CD8-positive, alpha-beta T cell (primary cell): ENCODE measurements at regions of chr15 and their contacts with region 1.

Region 1: DNA sequence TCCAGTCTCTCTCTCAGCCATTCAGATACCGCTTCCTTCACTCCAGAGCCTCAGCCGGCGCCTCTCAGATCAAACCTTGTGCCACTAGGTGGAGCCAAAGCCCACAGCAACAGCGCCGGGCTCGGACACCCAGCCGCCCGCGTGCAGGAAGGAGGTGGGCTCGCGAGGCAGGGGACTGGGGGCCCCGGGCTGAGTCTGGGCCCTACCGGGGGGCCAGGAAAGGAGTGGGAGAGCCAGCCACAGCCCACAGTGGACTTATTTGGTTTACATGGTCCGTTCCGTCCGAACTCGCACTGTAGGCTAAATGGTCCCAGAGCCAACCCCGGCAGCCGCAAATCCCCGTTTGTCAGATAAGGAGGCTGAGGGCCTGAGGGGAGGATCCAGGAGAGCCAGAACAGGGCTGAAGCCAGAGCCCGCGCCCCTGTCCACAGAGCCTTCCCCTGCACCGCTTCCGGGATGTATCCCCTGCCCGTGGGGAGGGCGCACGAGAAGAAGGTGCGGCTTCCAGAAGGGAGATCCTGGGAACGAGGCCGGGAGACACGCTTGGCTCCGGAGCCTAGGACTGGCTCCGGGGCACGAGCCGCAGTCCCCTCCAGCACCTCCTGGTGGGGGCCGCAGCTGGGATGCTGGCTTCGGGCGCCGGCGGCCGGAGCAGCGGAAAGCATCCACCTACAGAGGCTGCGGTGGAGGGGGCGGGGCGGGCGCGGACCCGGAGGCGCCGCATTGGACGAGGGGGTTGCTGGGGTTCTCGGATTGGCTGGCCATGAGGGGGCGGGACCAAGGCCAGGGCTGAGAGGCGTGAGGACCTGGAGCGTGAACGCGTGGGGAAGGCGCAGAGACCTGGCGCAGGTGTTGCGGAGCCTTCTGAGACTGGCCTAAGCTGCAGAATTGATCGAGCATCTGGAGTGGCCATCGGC is 6.5 kb upstream of the CYP11A1 start:
- DNase-seq: peak; percentile 92 to 97 (median 95)
- ATAC-seq: peak; percentile 96
- H3K4me3 ChIP-seq: peak overlapping the region; percentile 89 to 96
- H3K4me3 Mint-ChIP-seq: peak overlapping the region; percentile 82
- H3K27ac ChIP-seq: peak overlapping the region; percentile 45 to 62
- H3K27ac Mint-ChIP-seq: no peak overlapping the region
- H3K4me1 ChIP-seq: peaks cover 15% of the 10 kb centered on the region
- H3K4me1 Mint-ChIP-seq: peaks cover 16% of the 10 kb centered on the region
- H3K27me3 ChIP-seq: no peaks in the 10 kb centered on the region
- H3K27me3 Mint-ChIP-seq: peaks cover 8% of the 10 kb centered on the region
- CTCF ChIP-seq: peak; percentile 86

Region 2: GRCh38 chr15:72397796-72398588 is 1976.0 kb before region 1 on chr15 and contains the start of gene TMEM202:
- CTCF ChIA-PET with region 1: no interaction called
- POLR2A ChIA-PET with region 1: no interaction called
- intact Hi-C with region 1: no loop called
- DNase-seq: no peak
- ATAC-seq: no peak
- H3K4me3 ChIP-seq: no peak within 1 kb of the TSS
- H3K4me3 Mint-ChIP-seq: no peak within 1 kb of the TSS
- H3K27ac ChIP-seq: no peak within 1 kb of the TSS
- H3K27ac Mint-ChIP-seq: no peak within 1 kb of the TSS
- H3K4me1 ChIP-seq: no peaks in the 10 kb centered on the region
- H3K4me1 Mint-ChIP-seq: no peaks in the 10 kb centered on the region
- H3K27me3 ChIP-seq: no peaks in the 10 kb centered on the region
- H3K27me3 Mint-ChIP-seq: peaks cover 20% of the 10 kb centered on the region
- CTCF ChIP-seq: no peak
- total RNA-seq, gene TMEM202: not detected

Region 3: GRCh38 chr15:74417246-74417645 is 43.3 kb after region 1 on chr15:
- CTCF ChIA-PET with region 1: no interaction called
- POLR2A ChIA-PET with region 1: no interaction called
- intact Hi-C with region 1: no loop called
- DNase-seq: no peak
- ATAC-seq: no peak
- H3K4me3 ChIP-seq: no peak overlapping the region
- H3K4me3 Mint-ChIP-seq: no peak overlapping the region
- H3K27ac ChIP-seq: no peak overlapping the region
- H3K27ac Mint-ChIP-seq: no peak overlapping the region
- H3K4me1 ChIP-seq: peaks cover 22% of the 10 kb centered on the region
- H3K4me1 Mint-ChIP-seq: peaks cover 16% of the 10 kb centered on the region
- H3K27me3 ChIP-seq: no peaks in the 10 kb centered on the region
- H3K27me3 Mint-ChIP-seq: no peaks in the 10 kb centered on the region
- CTCF ChIP-seq: no peak

Region 4: DNA sequence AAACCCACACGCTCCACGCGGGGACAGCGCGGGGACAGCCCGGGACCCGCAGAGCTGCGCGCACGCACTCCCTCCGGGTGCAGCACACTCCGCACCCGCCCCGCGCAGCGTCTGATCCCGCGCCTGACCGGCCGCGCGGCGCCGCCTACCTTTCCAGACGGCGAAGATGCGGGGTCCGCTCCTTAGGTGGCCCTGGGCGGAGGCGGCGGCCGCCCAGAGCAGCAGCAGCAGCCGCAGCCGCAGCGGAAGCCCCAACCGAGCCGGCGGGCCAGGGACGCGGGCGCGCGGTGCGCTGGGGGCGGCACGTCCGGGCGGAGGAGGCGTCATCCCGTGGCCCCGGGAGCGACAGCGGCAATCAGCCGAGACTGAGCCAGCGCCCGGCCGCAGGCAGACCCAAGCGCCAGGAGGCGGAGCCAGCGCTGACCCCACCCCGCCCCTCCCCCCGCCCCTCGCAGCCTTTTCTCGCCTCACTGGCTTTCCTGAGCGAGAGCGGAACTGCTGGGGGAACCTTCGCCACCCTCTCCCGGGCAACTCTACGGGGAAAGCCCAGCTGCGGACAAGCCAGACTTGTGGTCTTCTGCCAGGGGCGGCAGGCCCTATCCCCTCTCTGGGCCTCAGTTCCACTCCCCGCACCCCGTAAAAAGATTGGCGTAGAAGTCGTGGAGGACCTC is 59.7 kb after region 1 on chr15 and contains the start of gene SEMA7A:
- CTCF ChIA-PET with region 1: interaction called, 717 read pairs
- POLR2A ChIA-PET with region 1: interaction called, 3 read pairs
- intact Hi-C with region 1: loop called (anchors 1 kb)
- DNase-seq: peak; percentile 49 to 91 (median 72)
- ATAC-seq: peak; percentile 81
- H3K4me3 ChIP-seq: peak within 1 kb of the TSS; percentile 56 to 68
- H3K4me3 Mint-ChIP-seq: peak within 1 kb of the TSS; percentile 80
- H3K27ac ChIP-seq: peak within 1 kb of the TSS; percentile 23 to 73
- H3K27ac Mint-ChIP-seq: peak within 1 kb of the TSS; percentile 57
- H3K4me1 ChIP-seq: peaks cover 16% of the 10 kb centered on the region
- H3K4me1 Mint-ChIP-seq: peaks cover 40% of the 10 kb centered on the region
- H3K27me3 ChIP-seq: no peaks in the 10 kb centered on the region
- H3K27me3 Mint-ChIP-seq: no peaks in the 10 kb centered on the region
- CTCF ChIP-seq: no peak
- total RNA-seq, gene SEMA7A: 8.8 to 9.4 TPM

Region 5: GRCh38 chr15:74460871-74461846 is 87.2 kb after region 1 on chr15 and contains the start of gene UBL7:
- CTCF ChIA-PET with region 1: interaction called, 717 read pairs
- POLR2A ChIA-PET with region 1: interaction called, 4 read pairs
- intact Hi-C with region 1: loop called (anchors 1 kb)
- DNase-seq: peak; percentile 93 to 99 (median 96)
- ATAC-seq: peak; percentile 98
- H3K4me3 ChIP-seq: peak within 1 kb of the TSS; percentile 74 to 85
- H3K4me3 Mint-ChIP-seq: peak within 1 kb of the TSS; percentile 93
- H3K27ac ChIP-seq: peak within 1 kb of the TSS; percentile 53 to 83
- H3K27ac Mint-ChIP-seq: peak within 1 kb of the TSS; percentile 94
- H3K4me1 ChIP-seq: peaks cover 21% of the 10 kb centered on the region
- H3K4me1 Mint-ChIP-seq: peaks cover 50% of the 10 kb centered on the region
- H3K27me3 ChIP-seq: no peaks in the 10 kb centered on the region
- H3K27me3 Mint-ChIP-seq: no peaks in the 10 kb centered on the region
- CTCF ChIP-seq: no peak
- total RNA-seq, gene UBL7: 21.7 to 23.1 TPM

Region 6: DNA sequence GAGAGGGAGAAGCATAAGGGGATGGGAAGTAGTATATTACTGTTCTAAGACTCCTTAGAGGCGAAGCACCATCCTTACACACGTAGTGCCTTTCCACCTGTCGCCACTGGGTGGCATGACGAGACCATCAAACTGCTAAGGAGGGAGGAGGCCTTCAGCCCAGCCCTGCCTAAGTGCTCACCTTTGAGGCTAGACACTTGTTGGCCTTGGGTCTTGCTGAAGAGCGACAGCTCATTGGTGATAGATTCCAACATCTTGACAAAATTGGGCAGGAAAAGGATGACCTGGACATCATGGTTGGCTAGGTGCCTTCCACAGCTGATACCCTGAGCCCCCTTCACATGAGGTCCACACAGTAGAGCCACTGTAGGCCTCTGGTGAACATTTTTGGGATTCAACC is 261.2 kb after region 1 on chr15:
- CTCF ChIA-PET with region 1: interaction called, 8 read pairs
- POLR2A ChIA-PET with region 1: no interaction called
- intact Hi-C with region 1: loop called in 1 of 2 experiments (anchors 1 kb)
- DNase-seq: peak; percentile 53 to 84 (median 73)
- ATAC-seq: peak; percentile 95
- H3K4me3 ChIP-seq: no peak overlapping the region
- H3K4me3 Mint-ChIP-seq: no peak overlapping the region
- H3K27ac ChIP-seq: peak overlapping the region in 1 of 2 experiments; percentile 36
- H3K27ac Mint-ChIP-seq: no peak overlapping the region
- H3K4me1 ChIP-seq: peaks cover 6% of the 10 kb centered on the region
- H3K4me1 Mint-ChIP-seq: peaks cover 5% of the 10 kb centered on the region
- H3K27me3 ChIP-seq: no peaks in the 10 kb centered on the region
- H3K27me3 Mint-ChIP-seq: no peaks in the 10 kb centered on the region
- CTCF ChIP-seq: peak; percentile 82

Region 7: GRCh38 chr15:74799856-74800547 is 426.0 kb after region 1 on chr15:
- CTCF ChIA-PET with region 1: no interaction called
- POLR2A ChIA-PET with region 1: no interaction called
- intact Hi-C with region 1: loop called in 1 of 2 experiments (anchors 1 kb)
- DNase-seq: peak; percentile 74 to 94 (median 87)
- ATAC-seq: peak; percentile 95
- H3K4me3 ChIP-seq: no peak overlapping the region
- H3K4me3 Mint-ChIP-seq: peak overlapping the region; percentile 42
- H3K27ac ChIP-seq: peak overlapping the region; percentile 36 to 94
- H3K27ac Mint-ChIP-seq: peak overlapping the region; percentile 92
- H3K4me1 ChIP-seq: peaks cover 56% of the 10 kb centered on the region
- H3K4me1 Mint-ChIP-seq: peaks cover 56% of the 10 kb centered on the region
- H3K27me3 ChIP-seq: no peaks in the 10 kb centered on the region
- H3K27me3 Mint-ChIP-seq: no peaks in the 10 kb centered on the region
- CTCF ChIP-seq: peak; percentile 92

Region 8: GRCh38 chr15:74995241-74995778 is 621.3 kb after region 1 on chr15 and contains the start of gene SCAMP5:
- CTCF ChIA-PET with region 1: no interaction called
- POLR2A ChIA-PET with region 1: no interaction called
- intact Hi-C with region 1: loop called in 1 of 2 experiments (anchors 2 kb)
- DNase-seq: peak; percentile 80 to 95 (median 91)
- ATAC-seq: peak; percentile 100
- H3K4me3 ChIP-seq: peak within 1 kb of the TSS; percentile 49 to 71
- H3K4me3 Mint-ChIP-seq: peak within 1 kb of the TSS; percentile 85
- H3K27ac ChIP-seq: no peak within 1 kb of the TSS
- H3K27ac Mint-ChIP-seq: no peak within 1 kb of the TSS
- H3K4me1 ChIP-seq: peaks cover 17% of the 10 kb centered on the region
- H3K4me1 Mint-ChIP-seq: peaks cover 11% of the 10 kb centered on the region
- H3K27me3 ChIP-seq: peaks cover 9% of the 10 kb centered on the region in 2 experiments
- H3K27me3 Mint-ChIP-seq: peaks cover 38% of the 10 kb centered on the region
- CTCF ChIP-seq: no peak
- total RNA-seq, gene SCAMP5: 0.71 to 0.72 TPM